ENCODE measurements at regions of chr3 and their contacts with region 1.

Region 1: DNA sequence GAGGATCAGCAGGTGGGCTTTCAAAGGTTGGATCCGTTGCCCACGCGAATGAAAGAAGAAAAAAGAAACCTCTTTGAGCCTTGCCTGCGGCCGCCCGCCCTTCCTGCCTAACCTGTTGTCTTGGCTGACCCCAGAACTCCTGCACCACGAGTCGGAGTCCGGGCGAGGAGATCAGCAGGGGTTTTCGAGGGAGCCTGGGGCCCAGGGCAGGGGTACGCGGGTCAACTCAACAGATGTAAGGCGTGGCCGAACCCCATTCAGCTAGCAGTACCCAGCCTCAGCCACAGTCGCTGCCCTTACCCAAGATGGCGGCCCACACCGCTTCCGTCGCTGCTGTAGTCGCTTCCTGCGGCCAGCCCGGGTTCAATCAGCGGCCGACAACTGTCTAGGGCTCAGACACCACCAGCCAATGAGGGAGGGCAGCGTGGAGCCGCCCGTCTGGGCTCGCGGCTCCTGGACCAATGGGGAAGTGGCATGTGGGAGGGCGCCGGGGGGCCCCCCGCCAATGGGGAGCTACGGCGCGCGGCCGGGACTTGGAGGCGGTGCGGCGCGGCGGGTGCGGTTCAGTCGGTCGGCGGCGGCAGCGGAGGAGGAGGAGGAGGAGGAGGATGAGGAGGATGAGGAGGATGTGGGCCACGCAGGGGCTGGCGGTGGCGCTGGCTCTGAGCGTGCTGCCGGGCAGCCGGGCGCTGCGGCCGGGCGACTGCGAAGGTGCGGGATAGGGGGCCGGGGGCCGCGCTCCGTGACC is at the start of gene MANF:
- DNase-seq: peak; percentile 99
- ATAC-seq: peak; percentile 99
- total RNA-seq, gene MANF: 46.1 TPM

Region 2: GRCh38 chr3:50568947-50569749 is 815.8 kb before region 1 on chr3 and contains the start of gene HEMK1:
- intact Hi-C with region 1: loop called (anchors 2 kb)
- DNase-seq: peak; percentile 99
- ATAC-seq: peak; percentile 90
- total RNA-seq, gene HEMK1: 14.0 TPM

Region 3: DNA sequence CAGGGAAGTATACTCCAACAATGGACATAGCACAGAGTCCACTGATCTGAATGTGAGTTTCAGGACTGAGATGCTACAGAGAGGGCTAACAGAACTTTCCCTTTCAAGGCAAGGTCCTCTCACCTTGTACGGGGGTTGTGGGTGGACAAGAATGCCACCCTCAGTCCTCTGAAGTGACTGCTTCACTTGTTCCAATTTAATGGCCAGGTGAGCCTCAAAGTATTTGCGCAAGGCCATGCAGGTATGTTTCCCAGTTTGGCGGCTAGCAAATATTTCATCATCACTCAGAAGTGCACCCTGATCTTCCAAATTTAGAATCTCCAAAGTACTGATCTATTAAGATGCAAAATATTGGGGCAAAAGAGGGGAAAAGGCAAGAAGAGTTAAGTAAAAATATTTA is 44.2 kb after region 1 on chr3:
- intact Hi-C with region 1: no loop called
- DNase-seq: no peak
- ATAC-seq: no peak

Region 4: DNA sequence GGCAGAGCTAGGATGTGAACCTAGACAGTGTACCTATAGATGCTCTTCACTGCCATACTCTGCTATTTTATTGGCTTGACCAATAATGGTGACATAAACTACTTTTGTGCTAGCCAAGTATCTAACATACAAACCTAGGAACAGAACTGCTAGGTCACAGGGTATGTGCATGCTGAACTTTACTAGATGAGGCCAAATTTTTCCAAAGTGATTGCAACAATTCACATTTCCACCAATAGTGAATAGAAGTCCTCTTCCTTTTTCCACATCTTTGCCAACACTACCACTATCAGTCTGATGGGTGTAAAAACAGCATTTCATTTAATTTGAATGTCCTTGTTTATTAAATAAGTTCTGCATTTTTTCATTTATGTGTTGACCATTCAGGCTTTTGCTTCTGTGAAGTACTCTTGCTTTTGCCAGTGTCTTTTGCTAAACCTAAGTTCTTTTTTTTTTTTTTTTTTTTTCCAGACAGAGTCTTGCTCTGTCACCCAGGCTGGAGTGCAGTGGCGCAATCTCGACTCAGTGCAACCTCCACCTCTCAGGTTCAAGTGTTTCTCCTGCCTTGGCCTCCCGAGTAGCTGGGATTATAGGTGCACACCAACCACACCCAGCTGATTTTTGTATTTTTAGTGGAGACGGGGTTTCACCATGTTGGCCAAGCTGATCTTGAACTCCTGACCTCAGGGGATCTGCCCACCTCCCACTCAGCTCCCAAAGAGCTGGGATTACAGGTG is 60.8 kb after region 1 on chr3:
- intact Hi-C with region 1: no loop called
- DNase-seq: no peak
- ATAC-seq: no peak

Region 5: DNA sequence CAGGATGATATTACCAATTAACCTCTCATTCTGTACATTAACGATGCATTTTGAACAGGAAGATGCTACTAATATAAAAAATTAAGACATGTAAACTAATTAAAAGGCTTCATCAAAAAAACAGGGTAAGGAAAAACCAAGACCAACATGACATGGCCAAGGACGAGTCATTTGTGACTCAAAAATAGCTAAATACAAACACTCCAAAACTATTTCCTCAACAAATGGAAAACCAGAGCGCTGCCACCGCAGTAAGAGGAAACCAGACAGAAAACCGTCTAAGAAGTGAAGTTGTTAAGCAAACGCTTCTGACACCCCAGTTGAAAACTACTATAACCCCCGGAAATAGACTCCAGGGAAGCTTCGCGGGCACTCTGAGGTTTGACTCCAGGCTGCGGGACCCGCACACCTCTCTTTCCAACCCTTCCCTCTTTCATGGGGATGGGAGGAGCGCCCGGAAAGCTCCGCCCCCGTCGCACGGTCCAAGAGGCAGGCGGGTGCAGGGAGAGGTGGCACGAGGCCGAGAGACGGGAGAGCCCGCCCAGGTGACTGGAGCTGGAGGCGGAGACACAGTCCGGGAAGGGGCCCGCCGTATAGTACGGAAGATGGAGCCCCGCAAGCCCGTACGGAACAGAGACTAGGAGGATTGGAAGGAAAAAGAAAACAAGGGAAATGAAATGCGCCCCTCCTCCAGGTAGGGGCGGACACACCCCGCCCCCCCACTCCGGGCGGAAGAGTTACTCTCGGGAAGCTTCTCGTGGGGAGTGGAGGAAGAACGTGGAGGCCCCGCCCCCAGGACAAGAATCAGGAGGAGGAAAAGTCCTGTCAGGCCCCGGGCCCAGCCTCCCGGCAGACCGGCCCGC is 114.2 kb after region 1 on chr3:
- intact Hi-C with region 1: loop called (anchors 2 kb)
- DNase-seq: peak; percentile 96
- ATAC-seq: peak; percentile 85

Region 6: DNA sequence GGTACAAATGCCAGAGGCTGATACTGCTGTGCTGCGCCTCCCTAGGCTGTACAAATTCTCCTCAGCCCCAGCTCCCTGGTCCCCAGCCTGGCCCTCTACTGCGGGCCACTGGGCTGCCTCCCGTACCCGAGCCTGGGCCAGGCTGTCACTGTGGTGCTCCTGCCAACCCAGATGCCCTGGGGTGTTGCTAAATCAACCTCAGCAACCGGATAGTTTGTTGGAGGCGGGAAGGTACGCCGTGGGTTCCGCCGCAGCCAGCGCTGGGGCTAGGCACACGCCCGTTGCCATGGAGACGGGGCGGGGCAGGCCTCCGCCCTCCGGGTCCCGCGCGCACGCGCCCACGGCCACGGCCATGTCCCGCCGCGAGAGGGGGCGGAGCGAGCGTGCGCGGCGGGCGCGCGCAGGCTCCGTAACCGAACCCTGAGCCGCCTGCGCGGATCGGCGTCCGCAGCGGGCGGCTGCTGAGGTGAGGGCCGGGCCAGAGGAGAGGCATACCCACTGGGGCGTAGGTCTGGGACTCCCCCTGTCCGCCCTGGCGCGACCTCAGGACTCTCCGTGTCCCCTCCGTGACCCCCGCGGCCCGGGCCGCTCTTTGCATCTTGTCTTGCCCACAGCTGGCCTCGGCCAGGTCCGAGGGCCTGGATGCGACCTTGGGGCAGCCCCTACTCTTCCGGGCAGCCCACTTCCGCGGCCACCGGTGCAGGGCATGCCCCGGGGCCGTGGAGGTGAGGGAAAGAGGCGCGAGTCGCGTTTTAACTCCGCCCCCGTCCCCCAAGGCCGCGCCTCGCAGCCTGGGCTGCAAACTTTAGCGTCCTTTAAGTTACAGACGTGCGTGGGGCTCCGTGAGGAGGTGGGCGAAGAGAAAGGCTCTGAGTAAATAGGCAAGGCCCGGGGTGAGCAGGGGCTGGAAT is 286.2 kb after region 1 on chr3 and contains the start of gene TEX264:
- intact Hi-C with region 1: loop called (anchors 5 kb)
- DNase-seq: peak; percentile 97
- ATAC-seq: peak; percentile 95
- total RNA-seq, gene TEX264: 37.1 TPM

Measured in Right ventricle myocardium inferior (tissue), 1 donor.